ENCODE measurements at regions of chr16 and their contacts with region 1.

Region 1: GRCh38 chr16:28910086-28911031 is 14.7 kb downstream of the RABEP2 start:
- DNase-seq: peak; percentile 72
- H3K4me3 ChIP-seq: no peak overlapping the region
- H3K27ac ChIP-seq: peak overlapping the region; percentile 12
- H3K4me1 ChIP-seq: no peaks in the 10 kb centered on the region
- H3K27me3 ChIP-seq: no peaks in the 10 kb centered on the region
- CTCF ChIP-seq: no peak

Region 2: DNA sequence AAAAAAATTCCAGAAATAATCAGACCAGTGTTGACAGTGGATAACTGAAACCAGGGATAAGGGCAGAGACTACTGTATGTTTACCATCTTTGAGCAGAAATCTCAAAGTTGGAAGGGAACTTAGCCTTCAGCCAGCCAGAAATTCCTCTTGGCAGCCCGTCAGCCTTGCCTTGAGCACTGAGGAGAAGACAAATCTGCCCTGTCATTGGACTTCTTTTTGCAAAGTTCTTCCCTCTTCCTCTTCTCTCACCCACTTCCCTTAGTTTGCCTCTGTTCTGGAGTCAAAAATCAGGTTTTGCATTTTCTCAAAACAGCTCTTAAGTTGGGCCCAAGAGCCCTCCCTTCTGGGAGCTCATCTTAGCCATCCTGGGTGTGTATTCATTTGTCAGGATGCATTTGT is 70.5 kb before region 1 on chr16:
- intact Hi-C with region 1: loop called (anchors 2 kb)
- DNase-seq: no peak
- H3K4me3 ChIP-seq: no peak overlapping the region
- H3K27ac ChIP-seq: no peak overlapping the region
- H3K4me1 ChIP-seq: peaks cover 2% of the 10 kb centered on the region
- H3K27me3 ChIP-seq: no peaks in the 10 kb centered on the region
- CTCF ChIP-seq: no peak